Right ventricle myocardium superior (tissue), 1 donor: ENCODE measurements at regions of chr12 and their contacts with region 1.

Region 1: DNA sequence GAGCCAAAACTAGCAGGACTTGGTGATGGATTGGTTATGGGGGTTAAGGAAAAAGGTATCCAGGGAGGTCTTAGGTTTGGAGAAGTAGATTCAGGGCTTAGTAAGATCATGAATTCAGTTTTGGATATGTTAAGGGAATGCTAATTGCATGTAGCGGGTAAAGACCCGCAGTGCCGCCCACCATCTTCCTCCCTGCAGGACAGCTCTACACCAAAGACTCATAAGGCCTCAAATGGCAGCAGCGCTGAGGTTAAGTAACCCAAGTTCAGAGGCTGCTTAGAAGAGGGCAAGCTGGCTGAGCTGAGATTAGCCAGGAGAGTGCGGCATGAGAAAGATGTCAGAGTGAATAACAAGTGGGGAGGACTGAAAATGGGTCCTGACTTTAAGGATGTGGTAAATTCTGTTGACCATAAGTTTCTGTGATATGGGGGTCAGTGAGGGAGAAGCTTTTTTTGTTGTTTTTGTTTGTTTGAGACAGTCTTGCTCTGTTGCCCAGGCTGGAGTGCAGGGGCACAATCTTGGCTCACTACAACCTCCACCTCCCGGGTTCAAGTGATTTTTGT is 26.2 kb downstream of the RAD9B start:
- DNase-seq: no peak
- ATAC-seq: no peak

Region 2: GRCh38 chr12:110371408-110372055 is 156.8 kb before region 1 on chr12:
- intact Hi-C with region 1: no loop called
- DNase-seq: no peak
- ATAC-seq: no peak

Region 3: GRCh38 chr12:110836291-110836690 is 307.9 kb after region 1 on chr12:
- intact Hi-C with region 1: loop called (anchors 10 kb)
- DNase-seq: no peak
- ATAC-seq: no peak

Region 4: DNA sequence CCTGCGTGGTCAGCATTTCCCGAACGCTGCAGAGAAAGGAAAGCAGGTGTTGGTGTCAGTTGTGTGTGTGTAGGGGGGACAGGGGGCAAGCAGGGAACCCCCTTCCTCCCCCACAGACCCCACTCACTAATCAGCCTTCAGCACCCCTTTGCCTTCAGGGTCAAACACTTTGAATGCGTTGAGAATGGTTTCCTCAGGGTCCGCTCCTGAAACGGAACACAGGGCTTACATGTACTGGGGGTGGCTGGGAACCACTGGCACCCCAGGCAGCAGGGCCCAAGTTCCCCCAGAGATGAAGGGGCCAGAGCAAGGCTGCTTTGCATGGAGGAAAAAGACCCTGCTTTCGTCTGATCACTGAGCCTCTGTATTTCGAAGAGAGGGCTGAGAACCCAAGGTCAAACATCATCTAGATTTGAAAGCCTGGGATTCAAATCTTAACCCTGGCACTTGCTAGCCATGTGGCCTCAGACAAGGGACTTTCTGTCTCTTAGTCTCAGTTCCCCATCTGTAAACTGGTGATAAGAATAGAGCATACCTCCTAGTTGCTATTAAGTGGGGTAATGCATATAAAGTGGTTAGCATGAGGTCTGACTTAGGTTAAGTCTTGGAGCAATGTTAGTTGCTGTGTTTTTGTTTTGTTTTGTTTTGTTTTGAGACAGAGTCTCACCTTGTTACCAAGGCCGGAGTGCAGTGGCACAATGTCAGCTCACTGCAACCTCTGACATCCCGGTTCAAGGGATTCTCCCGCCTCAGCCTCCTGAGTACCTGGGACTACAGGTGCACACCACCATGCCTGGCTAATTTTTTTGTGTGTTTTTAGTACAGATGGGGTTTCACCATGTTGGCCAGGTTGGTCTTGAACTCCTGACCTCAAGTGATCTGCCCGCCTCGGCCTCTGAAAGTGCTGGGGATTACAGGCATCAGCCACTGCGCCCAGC is 385.0 kb after region 1 on chr12:
- intact Hi-C with region 1: no loop called
- DNase-seq: no peak
- ATAC-seq: no peak